ENCODE measurements at regions of chr1 and their contacts with region 1.

Region 1: GRCh38 chr1:29689372-29690030 is 453.2 kb downstream of the PTPRU start:
- DNase-seq: no peak
- ATAC-seq: no peak
- H3K4me3 ChIP-seq: no peak overlapping the region
- H3K27ac ChIP-seq: no peak overlapping the region
- H3K4me1 ChIP-seq: peaks cover 23% of the 10 kb centered on the region
- H3K27me3 ChIP-seq: no peaks in the 10 kb centered on the region
- CTCF ChIP-seq: peak; percentile 38; the same call in 1 of the 2 replicates

Region 2: DNA sequence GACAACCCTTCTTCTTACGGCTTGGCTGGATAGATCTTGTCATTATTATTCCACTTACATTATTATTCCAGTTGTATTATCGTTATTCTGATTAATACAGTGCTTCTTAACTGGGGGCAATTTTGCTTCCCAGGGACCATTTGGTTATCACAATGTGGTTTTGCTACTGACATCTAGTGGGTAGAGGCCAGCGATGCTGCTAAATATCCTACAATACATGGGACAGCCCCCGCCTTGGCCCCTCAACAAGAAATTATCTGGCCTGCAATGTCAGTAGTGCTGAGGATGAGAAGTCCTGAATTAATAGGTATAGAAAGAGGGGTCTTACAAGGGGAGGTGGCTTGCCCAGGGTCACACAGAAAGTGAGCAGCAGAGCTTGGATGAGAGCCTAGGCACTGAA is 347.6 kb before region 1 on chr1:
- CTCF ChIA-PET with region 1: no interaction called
- POLR2A ChIA-PET with region 1: interaction called, 21 read pairs
- intact Hi-C with region 1: no loop called
- DNase-seq: peak; percentile 17
- ATAC-seq: 0 out of 2 replicates have a peak, but pooled peaks have one; percentile 29
- H3K4me3 ChIP-seq: no peak overlapping the region
- H3K27ac ChIP-seq: no peak overlapping the region
- H3K4me1 ChIP-seq: no peaks in the 10 kb centered on the region
- H3K27me3 ChIP-seq: peaks cover 30% of the 10 kb centered on the region; the same call in 1 of the 2 replicates
- CTCF ChIP-seq: peak; percentile 51

Region 3: DNA sequence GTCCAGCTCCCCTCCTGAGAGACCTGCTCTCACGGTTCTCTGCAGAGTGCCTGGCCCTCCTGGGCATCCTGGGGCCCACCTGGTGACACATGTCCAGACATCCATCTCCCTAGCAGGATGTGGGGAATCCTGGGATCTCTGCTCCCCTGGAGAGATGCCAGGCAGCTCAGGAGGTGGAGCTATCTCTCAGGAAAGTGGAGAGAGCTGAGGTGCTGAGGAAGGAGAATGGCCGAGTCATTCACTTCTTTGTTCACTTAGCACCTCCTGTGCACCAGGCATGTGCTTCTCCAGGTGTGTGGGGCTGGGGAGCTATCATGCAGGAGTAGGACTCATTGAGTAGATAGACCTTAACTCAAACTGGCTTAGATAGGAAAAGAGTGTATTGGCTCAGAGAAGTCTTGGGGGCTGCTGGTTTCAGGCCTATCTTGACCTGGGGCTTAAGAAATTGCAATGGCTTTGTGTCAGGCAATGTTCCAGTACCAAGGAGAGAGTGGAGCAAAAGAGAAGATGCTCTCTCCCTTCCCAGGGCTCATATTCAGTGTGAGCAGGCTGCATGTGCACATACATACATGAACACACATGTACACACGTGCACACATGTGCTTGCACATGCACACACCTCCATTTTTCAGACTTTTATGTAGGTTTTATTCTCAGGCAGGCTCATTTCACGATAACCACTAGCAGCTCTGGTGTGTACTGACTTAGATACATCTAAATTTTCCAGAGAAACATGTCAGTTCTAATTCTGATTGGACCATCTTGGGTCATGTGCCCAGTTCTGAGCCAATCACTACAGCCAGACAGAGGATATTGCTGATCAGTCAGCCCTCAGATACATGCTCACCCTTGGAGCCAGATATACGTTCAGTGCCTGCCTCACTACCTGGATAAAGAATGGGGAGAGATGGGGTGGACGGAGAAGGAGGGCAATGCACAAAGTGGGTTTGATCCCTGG is 15.6 kb before region 1 on chr1:
- CTCF ChIA-PET with region 1: no interaction called
- POLR2A ChIA-PET with region 1: no interaction called
- intact Hi-C with region 1: no loop called
- DNase-seq: peak; percentile 27
- ATAC-seq: no peak
- H3K4me3 ChIP-seq: no peak overlapping the region
- H3K27ac ChIP-seq: no peak overlapping the region
- H3K4me1 ChIP-seq: no peaks in the 10 kb centered on the region
- H3K27me3 ChIP-seq: no peaks in the 10 kb centered on the region
- CTCF ChIP-seq: no peak

Measured in PC-3 (cell line).